Activated CD8-positive, alpha-beta T cell treated with anti-CD3 and anti-CD28 coated beads, Interleukin-2, amount 10 ng/mL, durations not matched to agents 7 days and 5 days (primary cell): ENCODE measurements at regions of chr19 and their contacts with region 1.

Region 1: GRCh38 chr19:10259162-10259905 is 7.3 kb downstream of the MRPL4 start:
- DNase-seq: peak; percentile 94
- ATAC-seq: peak; percentile 81
- H3K4me3 Mint-ChIP-seq: no peak overlapping the region
- H3K27ac Mint-ChIP-seq: no peak overlapping the region
- H3K4me1 Mint-ChIP-seq: peaks cover 27% of the 10 kb centered on the region
- H3K27me3 Mint-ChIP-seq: no peaks in the 10 kb centered on the region

Region 2: GRCh38 chr19:10142701-10143375 is 116.5 kb before region 1 on chr19:
- CTCF ChIA-PET with region 1: no interaction called
- POLR2A ChIA-PET with region 1: no interaction called
- DNase-seq: peak; percentile 69
- ATAC-seq: peak; percentile 89
- H3K4me3 Mint-ChIP-seq: peak overlapping the region; percentile 55
- H3K27ac Mint-ChIP-seq: peak overlapping the region; percentile 90
- H3K4me1 Mint-ChIP-seq: peaks cover 49% of the 10 kb centered on the region
- H3K27me3 Mint-ChIP-seq: no peaks in the 10 kb centered on the region

Region 3: DNA sequence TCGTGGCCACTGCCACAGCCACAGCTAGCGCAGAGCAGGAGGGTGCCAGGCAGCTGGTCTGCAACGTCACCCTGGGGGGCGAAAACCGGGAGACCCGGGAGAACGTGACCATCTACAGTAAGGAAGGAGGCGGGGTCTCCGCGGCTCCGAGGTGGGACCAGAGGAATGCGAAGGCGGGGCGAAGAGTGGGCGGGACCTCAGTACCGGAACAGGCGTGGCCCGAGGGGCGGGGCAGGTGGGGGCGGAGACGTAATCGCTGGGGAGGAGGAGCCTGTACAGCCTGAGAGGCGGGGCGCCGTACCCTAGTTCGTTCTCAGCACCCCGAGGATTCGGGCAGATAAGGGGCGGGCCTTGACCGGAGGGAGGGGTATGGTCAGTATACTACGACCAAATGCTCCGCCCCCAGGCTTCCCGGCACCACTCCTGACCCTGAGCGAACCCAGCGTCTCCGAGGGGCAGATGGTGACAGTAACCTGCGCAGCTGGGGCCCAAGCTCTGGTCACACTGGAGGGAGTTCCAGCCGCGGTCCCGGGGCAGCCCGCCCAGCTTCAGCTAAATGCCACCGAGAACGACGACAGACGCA is 33.0 kb after region 1 on chr19:
- CTCF ChIA-PET with region 1: interaction called, 11 read pairs
- POLR2A ChIA-PET with region 1: interaction called, 3 read pairs
- DNase-seq: peak; percentile 81
- ATAC-seq: peak; percentile 28
- H3K4me3 Mint-ChIP-seq: peak overlapping the region; percentile 73
- H3K27ac Mint-ChIP-seq: peak overlapping the region; percentile 70
- H3K4me1 Mint-ChIP-seq: peaks cover 81% of the 10 kb centered on the region
- H3K27me3 Mint-ChIP-seq: peaks cover 77% of the 10 kb centered on the region

Region 4: DNA sequence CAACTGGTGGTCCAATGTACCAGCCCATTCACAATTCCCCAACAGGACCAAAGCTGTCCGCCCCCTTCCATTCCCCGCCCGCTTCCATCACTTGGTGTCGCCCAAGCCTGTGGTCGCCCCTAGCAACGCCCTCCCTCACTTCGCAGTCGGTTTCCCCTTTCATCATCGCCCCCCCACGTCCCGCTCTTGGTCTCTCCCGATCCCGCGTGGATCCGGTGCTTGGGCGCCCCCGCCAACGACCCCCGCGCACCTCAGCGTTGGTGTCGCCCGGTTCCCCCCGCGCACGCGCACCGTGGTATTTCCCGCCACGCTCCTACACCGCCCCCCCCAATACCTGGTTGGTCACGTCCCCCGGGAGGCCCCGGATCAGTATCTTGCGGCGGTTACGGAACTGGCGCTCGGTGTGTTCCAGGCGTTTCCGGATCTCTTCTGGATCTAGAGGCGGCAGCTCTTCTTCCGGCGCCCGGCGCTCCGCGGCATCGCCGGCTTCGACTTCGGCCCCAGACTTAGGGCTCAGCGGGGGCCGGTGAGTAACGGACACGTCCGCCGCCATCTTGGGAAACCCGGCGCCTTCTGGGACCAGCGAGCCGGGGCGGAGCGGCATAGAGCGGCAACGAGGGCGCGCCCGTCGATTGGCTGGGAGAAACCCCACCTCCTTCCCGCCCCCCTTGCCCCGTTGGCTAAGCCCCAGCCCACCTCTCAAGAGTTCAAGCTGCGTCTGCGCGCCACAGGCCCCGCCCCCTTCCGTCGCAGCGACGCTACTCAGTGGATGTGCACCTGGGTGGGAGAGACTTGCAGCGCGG is 73.8 kb after region 1 on chr19 and contains the start of gene RAVER1:
- CTCF ChIA-PET with region 1: interaction called, 15 read pairs
- POLR2A ChIA-PET with region 1: no interaction called
- DNase-seq: peak; percentile 99
- ATAC-seq: peak; percentile 97
- H3K4me3 Mint-ChIP-seq: peak within 1 kb of the TSS; percentile 95
- H3K27ac Mint-ChIP-seq: peak within 1 kb of the TSS; percentile 96
- H3K4me1 Mint-ChIP-seq: peaks cover 37% of the 10 kb centered on the region
- H3K27me3 Mint-ChIP-seq: no peaks in the 10 kb centered on the region
- total RNA-seq, gene RAVER1: 79.8 to 91.7 TPM

Region 5: GRCh38 chr19:10380313-10381102 is 121.2 kb after region 1 on chr19 and contains the start of gene TYK2:
- CTCF ChIA-PET with region 1: interaction called, 383 read pairs
- POLR2A ChIA-PET with region 1: no interaction called
- DNase-seq: peak; percentile 97
- ATAC-seq: peak; percentile 97
- H3K4me3 Mint-ChIP-seq: peak within 1 kb of the TSS; percentile 89
- H3K27ac Mint-ChIP-seq: peak within 1 kb of the TSS; percentile 91
- H3K4me1 Mint-ChIP-seq: peaks cover 26% of the 10 kb centered on the region
- H3K27me3 Mint-ChIP-seq: no peaks in the 10 kb centered on the region
- total RNA-seq, gene TYK2: 216 to 240 TPM

Region 6: DNA sequence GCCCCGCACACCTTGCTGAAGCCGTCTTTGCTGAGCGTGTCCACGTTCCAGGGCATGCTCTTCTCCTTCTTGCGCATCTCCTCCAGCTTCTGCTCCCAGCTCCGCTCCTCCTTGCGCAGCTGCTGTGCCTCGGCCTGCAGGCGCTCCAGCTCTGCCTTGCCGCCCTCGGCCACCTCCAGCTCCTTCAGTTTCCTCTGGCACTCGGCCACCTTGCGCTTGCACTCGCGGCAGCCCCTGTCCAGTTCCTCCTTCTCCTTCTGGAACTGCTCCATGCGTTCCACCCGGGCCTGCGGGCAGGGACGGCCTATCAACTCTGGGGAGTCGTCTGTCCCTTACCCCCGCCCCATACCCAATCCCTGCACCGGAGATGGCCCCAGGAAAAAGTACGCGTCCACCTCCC is 136.6 kb after region 1 on chr19:
- CTCF ChIA-PET with region 1: interaction called, 383 read pairs
- POLR2A ChIA-PET with region 1: interaction called, 4 read pairs
- DNase-seq: no peak
- ATAC-seq: no peak
- H3K4me3 Mint-ChIP-seq: no peak overlapping the region
- H3K27ac Mint-ChIP-seq: no peak overlapping the region
- H3K4me1 Mint-ChIP-seq: peaks cover 30% of the 10 kb centered on the region
- H3K27me3 Mint-ChIP-seq: no peaks in the 10 kb centered on the region